Activated B cell treated with CpG ODN at 0.5 μM for 24 hours (primary cell): ENCODE measurements at regions of chr12 and their contacts with region 1.

Region 1: GRCh38 chr12:52032804-52033502 is 18.3 kb upstream of the NR4A1 start:
- DNase-seq: peak; percentile 82
- ATAC-seq: peak; percentile 84
- H3K4me3 Mint-ChIP-seq: peak overlapping the region; percentile 77
- H3K27ac Mint-ChIP-seq: peak overlapping the region; percentile 88
- H3K4me1 Mint-ChIP-seq: peaks cover 44% of the 10 kb centered on the region
- H3K27me3 Mint-ChIP-seq: no peaks in the 10 kb centered on the region
- CTCF ChIP-seq: no peak

Region 2: GRCh38 chr12:51980051-51980808 is 52.7 kb before region 1 on chr12:
- CTCF ChIA-PET with region 1: no interaction called
- POLR2A ChIA-PET with region 1: no interaction called
- intact Hi-C with region 1: no loop called
- DNase-seq: peak; percentile 41
- ATAC-seq: peak; percentile 98
- H3K4me3 Mint-ChIP-seq: no peak overlapping the region
- H3K27ac Mint-ChIP-seq: no peak overlapping the region
- H3K4me1 Mint-ChIP-seq: peaks cover 11% of the 10 kb centered on the region
- H3K27me3 Mint-ChIP-seq: no peaks in the 10 kb centered on the region
- CTCF ChIP-seq: peak; percentile 76

Region 3: GRCh38 chr12:51994959-51995358 is 38.0 kb before region 1 on chr12:
- CTCF ChIA-PET with region 1: interaction called, 10 read pairs
- POLR2A ChIA-PET with region 1: no interaction called
- intact Hi-C with region 1: no loop called
- DNase-seq: no peak
- ATAC-seq: no peak
- H3K4me3 Mint-ChIP-seq: no peak overlapping the region
- H3K27ac Mint-ChIP-seq: no peak overlapping the region
- H3K4me1 Mint-ChIP-seq: peaks cover 3% of the 10 kb centered on the region
- H3K27me3 Mint-ChIP-seq: no peaks in the 10 kb centered on the region
- CTCF ChIP-seq: no peak

Region 4: GRCh38 chr12:52004042-52004648 is 28.8 kb before region 1 on chr12:
- CTCF ChIA-PET with region 1: interaction called, 306 read pairs
- POLR2A ChIA-PET with region 1: interaction called, 13 read pairs
- intact Hi-C with region 1: no loop called
- DNase-seq: no peak
- ATAC-seq: no peak
- H3K4me3 Mint-ChIP-seq: no peak overlapping the region
- H3K27ac Mint-ChIP-seq: no peak overlapping the region
- H3K4me1 Mint-ChIP-seq: peaks cover 39% of the 10 kb centered on the region
- H3K27me3 Mint-ChIP-seq: no peaks in the 10 kb centered on the region
- CTCF ChIP-seq: no peak

Region 5: GRCh38 chr12:52050761-52051541 is 18.0 kb after region 1 on chr12 and contains the start of gene NR4A1:
- CTCF ChIA-PET with region 1: interaction called, 5 read pairs
- POLR2A ChIA-PET with region 1: interaction called, 94 read pairs
- intact Hi-C with region 1: loop called (anchors 1 kb)
- DNase-seq: peak; percentile 100
- ATAC-seq: peak; percentile 82
- H3K4me3 Mint-ChIP-seq: peak within 1 kb of the TSS; percentile 92
- H3K27ac Mint-ChIP-seq: peak within 1 kb of the TSS; percentile 95
- H3K4me1 Mint-ChIP-seq: peaks cover 49% of the 10 kb centered on the region
- H3K27me3 Mint-ChIP-seq: no peaks in the 10 kb centered on the region
- CTCF ChIP-seq: no peak
- total RNA-seq, gene NR4A1: 18.8 and 24.2 TPM in 2 replicates

Region 6: DNA sequence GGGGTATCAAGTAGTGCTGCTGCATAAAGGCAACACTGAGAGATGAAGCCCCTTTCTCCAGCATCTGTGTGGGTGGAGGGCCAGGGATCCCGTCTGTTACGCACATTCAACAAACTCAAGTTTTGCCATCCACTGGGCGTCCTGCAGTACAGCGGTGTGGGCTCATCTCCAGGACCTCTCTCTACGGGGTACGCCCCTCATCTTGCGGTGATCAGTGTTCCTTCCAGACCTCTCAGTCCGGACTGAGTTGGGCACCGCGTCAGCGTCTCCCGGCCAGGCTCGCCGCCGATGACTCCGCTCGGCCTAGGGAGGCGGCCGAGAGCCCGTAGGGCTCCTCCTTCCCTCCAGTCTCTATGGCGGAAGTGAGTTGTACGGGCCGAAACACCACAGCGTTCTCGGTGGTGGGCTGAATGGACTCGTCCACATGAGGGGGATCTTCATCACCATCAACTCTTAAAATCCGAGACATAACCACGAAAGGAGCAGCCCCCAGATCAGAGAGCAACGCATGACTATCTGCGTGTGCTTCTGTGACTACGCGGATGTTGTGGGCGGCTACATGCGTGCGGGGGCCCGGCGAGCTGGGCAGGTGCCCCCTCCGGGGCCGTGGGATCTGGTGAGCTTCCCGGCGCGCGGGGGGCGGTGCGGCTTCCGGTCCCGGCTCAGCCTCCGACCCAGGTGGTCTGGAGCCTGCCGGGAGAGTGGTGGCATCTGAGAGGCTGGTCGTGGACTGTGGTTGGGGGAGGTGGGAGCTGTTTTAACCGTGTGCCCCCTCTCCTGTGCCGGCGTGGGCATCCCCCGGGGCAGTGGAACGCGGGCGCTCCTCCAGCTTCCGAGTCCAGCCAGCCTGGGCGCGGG is 36.6 kb after region 1 on chr12 and contains the start of gene ATG101:
- CTCF ChIA-PET with region 1: interaction called, 89 read pairs
- POLR2A ChIA-PET with region 1: interaction called, 15 read pairs
- intact Hi-C with region 1: loop called (anchors 1 kb)
- DNase-seq: peak; percentile 87
- ATAC-seq: peak; percentile 94
- H3K4me3 Mint-ChIP-seq: peak within 1 kb of the TSS; percentile 87
- H3K27ac Mint-ChIP-seq: peak within 1 kb of the TSS; percentile 96
- H3K4me1 Mint-ChIP-seq: peaks cover 47% of the 10 kb centered on the region
- H3K27me3 Mint-ChIP-seq: no peaks in the 10 kb centered on the region
- CTCF ChIP-seq: peak; percentile 31
- total RNA-seq, gene ATG101: 25.6 and 32.5 TPM in 2 replicates